ENCODE measurements at regions of chr22 and their contacts with region 1.

Region 1: GRCh38 chr22:35330258-35330861 is 30.7 kb downstream of the TOM1 start:
- DNase-seq: peak; percentile 54
- H3K4me3 ChIP-seq: peak overlapping the region; percentile 15
- H3K27ac ChIP-seq: no peak overlapping the region
- H3K4me1 ChIP-seq: peaks cover 19% of the 10 kb centered on the region
- CTCF ChIP-seq: no peak

Region 2: GRCh38 chr22:35257321-35258190 is 72.8 kb before region 1 on chr22 and contains the start of gene HMGXB4:
- CTCF ChIA-PET with region 1: no interaction called
- POLR2A ChIA-PET with region 1: interaction called, 3 read pairs
- intact Hi-C with region 1: loop called (anchors 5 kb)
- DNase-seq: peak; percentile 96
- H3K4me3 ChIP-seq: peak within 1 kb of the TSS; percentile 87
- H3K27ac ChIP-seq: peak within 1 kb of the TSS; percentile 73
- H3K4me1 ChIP-seq: peaks cover 19% of the 10 kb centered on the region
- CTCF ChIP-seq: peak; percentile 68
- total RNA-seq, gene HMGXB4: 25.0 and 25.2 TPM in 2 replicates